BJ (cell line): ENCODE measurements at regions of chr19 and their contacts with region 1.

Region 1: DNA sequence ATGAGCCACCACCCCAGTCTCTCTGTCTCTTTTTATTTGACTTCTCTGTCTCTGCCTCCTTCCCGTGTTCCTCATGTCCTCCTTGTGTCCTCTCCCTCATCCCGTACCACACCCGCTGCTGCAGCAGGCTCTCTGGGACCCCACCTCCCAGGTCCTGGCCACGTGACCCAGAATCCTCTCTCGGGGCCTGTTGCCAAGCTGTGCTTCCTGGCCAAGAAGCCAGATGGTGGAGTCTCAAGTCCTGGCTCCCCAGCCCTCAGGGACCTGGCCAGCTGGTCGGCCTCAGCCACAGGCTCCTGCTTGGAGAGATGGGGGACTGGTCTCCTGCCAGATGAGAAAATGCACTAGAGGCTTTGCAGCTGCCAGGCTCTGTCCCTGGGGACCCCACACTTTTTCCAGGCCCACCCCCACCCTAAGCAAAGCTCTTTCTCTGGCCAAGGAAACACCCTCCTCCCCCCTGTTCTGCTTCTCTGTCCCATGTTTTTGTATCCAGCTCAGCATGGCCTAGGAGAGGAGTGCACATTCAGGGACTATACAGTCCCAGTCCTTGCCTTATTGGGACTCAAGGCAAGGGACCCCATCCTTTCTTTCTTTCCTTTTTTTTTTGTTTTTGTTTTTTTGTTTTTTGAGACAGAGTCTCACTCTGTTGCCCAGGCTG is 34.3 kb upstream of the SHKBP1 start:
- DNase-seq: no peak
- H3K4me3 ChIP-seq: no peak overlapping the region
- H3K27me3 ChIP-seq: 0 out of 2 replicates have a peak, but pooled peaks cover 1% of the 10 kb centered on the region
- CTCF ChIP-seq: no peak

Region 2: DNA sequence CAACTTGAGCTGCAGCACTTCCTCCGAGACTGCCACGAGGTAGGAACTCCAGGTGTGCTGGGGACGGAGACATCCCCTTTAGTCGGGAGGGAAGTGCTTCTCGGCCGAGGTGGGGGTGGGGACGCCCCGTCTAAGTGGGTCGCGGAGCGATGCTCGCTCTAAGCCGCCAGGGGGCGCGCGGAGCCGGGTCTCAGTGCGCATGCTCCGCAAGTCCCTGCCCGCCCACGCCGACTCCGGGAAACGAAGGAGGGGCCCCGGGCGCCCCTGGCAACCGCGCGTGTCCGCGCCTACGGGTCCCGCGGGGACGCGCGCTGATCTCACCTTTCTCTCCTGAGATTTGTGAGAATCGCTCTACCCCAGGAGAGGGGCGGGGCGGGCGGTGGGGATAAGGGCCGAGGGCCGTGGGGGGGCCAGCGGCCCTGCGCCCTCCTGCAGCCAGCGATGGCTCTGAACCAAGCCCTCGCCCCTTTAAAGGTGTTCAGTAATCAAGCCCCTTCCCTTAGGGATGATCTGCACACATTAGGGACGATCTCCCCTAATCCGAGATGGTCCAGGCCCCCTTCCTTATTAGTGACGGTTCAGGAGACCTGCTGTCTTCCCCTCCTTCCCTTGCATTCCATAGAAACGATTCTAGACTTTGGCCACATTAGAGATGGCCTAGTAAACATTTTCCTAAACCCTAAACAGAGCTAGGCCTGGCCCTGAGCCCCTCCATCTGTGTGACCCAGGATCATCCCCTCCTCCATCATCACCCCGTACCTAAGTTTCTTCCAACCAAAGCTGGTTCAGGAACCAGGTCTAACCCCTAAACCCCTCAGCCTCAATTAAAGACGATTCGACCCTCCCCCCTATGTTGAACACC is 13.0 kb before region 1 on chr19:
- CTCF ChIA-PET with region 1: interaction called, 19 read pairs
- POLR2A ChIA-PET with region 1: no interaction called
- DNase-seq: peak; percentile 9
- H3K4me3 ChIP-seq: peak overlapping the region; percentile 42
- H3K27me3 ChIP-seq: peaks cover 4% of the 10 kb centered on the region
- CTCF ChIP-seq: peak; percentile 94

Region 3: DNA sequence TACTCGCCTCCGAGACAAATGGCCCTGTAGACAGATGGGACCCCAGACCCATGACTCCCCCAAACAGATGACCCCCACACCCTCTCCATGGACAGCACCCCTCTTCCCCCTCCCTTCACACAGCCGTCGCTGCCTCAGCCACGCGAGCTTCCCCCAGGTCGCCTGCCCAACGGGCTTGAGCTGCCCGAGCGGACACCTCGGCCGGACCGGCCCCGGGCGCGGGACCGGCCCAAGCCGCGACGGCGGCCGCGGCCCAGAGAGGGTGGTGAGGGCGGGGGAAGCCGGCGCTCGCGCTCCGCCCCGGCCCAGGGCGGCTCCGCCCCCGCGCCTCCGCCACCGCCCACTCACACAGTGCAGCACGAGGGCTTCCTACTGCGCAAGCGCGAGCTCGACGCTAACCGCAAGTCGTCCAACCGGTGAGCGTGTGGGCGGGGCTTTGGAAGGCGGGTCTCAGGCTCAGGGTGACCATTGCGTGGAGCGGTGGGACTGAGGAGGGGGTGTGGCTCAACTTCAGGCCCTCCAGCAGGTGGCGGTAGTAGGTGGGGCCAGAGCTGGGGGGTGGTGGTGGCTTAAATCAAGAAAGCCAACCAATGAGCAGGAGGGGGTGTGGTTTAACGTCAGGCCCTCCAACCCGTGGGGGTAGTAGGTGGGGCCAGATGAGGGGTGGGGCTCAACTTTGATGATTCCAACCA is 28.1 kb after region 1 on chr19:
- CTCF ChIA-PET with region 1: interaction called, 12 read pairs
- POLR2A ChIA-PET with region 1: no interaction called
- DNase-seq: peak; percentile 97
- H3K4me3 ChIP-seq: peak overlapping the region; percentile 66
- H3K27me3 ChIP-seq: peaks cover 2% of the 10 kb centered on the region; the same call in 1 of the 2 replicates
- CTCF ChIP-seq: peak; percentile 66

Region 4: DNA sequence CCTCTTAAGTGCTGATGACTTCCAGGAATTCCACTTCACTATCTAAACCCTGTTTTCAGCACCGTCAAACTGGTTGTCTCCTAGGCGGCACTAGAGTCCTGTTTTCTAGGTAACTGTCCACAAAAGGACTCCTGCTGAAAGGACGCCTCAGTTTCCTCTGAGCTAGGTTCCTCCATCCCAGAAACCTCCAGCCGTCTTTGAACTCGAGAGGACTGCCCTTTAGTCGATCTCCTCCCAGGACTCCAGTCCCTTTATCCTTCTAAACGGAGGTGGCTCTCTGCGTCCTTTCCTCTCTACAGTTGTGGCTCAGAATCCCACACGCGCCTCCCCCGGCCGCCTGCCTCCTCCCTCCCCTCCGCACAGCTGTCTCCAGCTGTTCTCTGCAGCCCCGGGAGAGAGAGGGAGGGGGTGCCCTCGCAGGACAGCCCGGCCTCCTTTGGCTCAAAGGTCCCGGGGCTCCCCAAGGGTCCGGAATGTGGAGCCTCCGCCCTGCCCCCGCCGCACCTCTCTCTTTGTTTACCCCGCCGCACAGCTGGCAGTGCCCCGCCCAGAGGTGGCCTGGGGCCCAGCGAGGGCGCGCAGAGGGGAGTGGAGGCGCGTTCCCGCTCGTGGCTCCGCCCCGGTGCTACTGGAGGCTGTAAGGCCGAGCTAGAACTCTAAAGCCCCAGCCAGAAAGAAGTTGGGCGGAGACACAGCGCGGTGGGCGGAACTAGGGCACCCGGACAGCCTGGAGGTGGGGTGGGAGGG is 61.2 kb after region 1 on chr19:
- CTCF ChIA-PET with region 1: interaction called, 82 read pairs
- POLR2A ChIA-PET with region 1: no interaction called
- DNase-seq: peak; percentile 85
- H3K4me3 ChIP-seq: peak overlapping the region; percentile 44
- H3K27me3 ChIP-seq: 0 out of 2 replicates have a peak, but pooled peaks cover 2% of the 10 kb centered on the region
- CTCF ChIP-seq: peak; percentile 20; the same call in 1 of the 2 replicates